Activated CD4-positive, alpha-beta T cell treated with anti-CD3 and anti-CD28 coated beads, Interleukin-2, amount 10 ng/mL, durations not matched to agents 24 days and 14 days (primary cell): ENCODE measurements at regions of chr10 and their contacts with region 1.

Region 1: GRCh38 chr10:23694446-23694920 is 255.6 kb downstream of the OTUD1 start:
- DNase-seq: no peak
- H3K4me3 Mint-ChIP-seq: peak overlapping the region; percentile 58
- H3K27ac Mint-ChIP-seq: no peak overlapping the region
- H3K4me1 Mint-ChIP-seq: no peaks in the 10 kb centered on the region
- H3K27me3 Mint-ChIP-seq: peaks cover 53% of the 10 kb centered on the region

Region 2: GRCh38 chr10:23198940-23199767 is 495.3 kb before region 1 on chr10:
- intact Hi-C with region 1: loop called (anchors 5 kb)
- DNase-seq: no peak
- H3K4me3 Mint-ChIP-seq: no peak overlapping the region
- H3K27ac Mint-ChIP-seq: no peak overlapping the region
- H3K4me1 Mint-ChIP-seq: no peaks in the 10 kb centered on the region
- H3K27me3 Mint-ChIP-seq: peaks cover 81% of the 10 kb centered on the region

Region 3: DNA sequence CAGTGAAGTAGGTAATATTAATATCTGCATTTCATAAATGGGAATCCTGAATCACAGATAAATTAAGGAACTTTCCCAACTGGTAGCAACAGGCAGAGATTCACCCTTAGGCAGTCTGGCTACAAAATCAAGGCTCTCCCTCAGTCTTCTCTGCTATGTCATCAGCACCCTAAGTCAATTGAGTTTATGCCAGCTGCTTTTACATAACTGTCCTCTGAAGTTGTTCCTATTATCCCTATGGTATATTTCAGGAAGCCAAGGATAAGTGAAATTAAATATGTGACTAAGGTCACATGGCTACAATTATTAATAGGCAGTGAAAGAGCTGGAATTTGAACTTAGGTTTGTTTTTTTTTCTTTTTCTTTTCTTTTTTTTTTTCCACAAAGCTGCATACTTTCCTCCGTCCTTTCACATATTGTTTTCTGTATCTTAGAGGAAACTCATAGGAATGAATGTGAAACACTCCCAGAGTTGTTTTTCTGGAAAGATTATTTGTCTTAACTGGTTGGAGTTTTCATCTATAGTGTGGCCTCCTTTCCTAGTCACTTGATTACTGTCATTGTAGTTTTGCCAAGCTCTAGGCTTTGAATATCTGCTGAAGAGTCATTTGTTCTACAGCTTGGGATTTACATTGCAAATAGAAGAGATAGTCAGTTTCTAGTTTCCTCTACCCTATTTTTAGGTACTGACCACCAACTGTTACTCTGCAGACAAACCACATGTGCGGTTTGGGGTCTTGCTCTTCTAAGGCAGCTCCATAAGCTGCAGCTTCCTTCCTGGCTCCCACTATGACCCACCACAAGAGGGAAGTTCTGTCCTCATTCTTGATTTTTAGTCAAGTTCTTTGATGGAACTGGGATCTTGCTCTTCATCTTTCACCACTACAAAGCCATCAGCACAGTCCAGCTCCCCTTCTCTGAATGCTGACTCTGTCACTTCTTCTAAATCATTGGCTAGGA is 176.4 kb after region 1 on chr10:
- intact Hi-C with region 1: no loop called
- DNase-seq: no peak
- H3K4me3 Mint-ChIP-seq: no peak overlapping the region
- H3K27ac Mint-ChIP-seq: no peak overlapping the region
- H3K4me1 Mint-ChIP-seq: no peaks in the 10 kb centered on the region
- H3K27me3 Mint-ChIP-seq: no peaks in the 10 kb centered on the region